AG04450 (cell line): ENCODE measurements at regions of chr19 and their contacts with region 1.

Region 1: GRCh38 chr19:15251749-15252397 is 19.6 kb upstream of the EPHX3 start:
- DNase-seq: peak; percentile 90
- H3K4me3 ChIP-seq: peak overlapping the region; percentile 34; the same call in 1 of the 2 replicates
- H3K27ac ChIP-seq: peak overlapping the region; percentile 100
- H3K27me3 ChIP-seq: no peaks in the 10 kb centered on the region
- CTCF ChIP-seq: peak; percentile 64

Region 2: DNA sequence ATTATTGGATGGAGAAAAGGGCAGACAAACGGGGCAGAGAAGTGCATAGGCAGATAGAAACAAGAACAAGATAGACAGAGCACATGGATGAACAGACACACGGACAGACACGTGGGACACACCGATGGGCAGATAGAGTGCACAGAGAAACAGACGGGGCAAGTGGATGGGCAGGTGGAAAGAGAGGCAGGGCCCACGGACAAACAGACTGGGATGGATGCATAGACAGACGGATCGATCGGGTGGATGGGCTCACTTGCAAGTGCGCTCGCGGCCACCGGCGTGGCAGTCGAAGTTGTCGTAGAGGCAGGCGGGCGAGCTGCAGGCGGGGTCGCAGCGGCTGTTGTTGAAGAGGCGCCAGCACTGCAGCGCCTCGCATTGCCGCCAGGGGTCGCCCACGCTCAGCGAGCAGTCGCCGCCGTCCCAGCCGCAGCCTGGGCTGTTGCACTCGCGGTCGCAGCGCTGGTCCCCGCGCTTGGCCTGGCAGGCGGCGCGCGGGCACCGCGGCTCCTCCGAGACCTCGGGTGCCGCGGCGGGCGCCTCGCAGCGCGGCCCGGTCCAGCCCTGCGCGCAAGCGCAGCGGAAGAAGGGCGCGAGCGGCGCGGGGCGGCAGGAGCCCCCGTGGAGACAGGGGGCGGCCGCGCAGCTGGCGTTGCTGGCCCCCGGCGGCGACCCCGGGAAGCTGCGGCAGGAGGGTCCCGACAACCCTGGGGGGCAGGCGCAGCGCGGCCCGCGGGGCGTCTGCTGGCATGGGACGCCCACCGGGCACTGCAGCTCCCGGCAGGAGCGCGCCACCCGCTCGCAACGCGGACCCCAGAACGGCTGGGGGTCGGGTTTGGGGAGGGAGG is 74.4 kb before region 1 on chr19:
- CTCF ChIA-PET with region 1: interaction called, 14 read pairs
- POLR2A ChIA-PET with region 1: interaction called, 7 read pairs
- DNase-seq: no peak
- H3K4me3 ChIP-seq: no peak overlapping the region; the same call in 1 of the 2 replicates
- H3K27ac ChIP-seq: no peak overlapping the region
- H3K27me3 ChIP-seq: no peaks in the 10 kb centered on the region
- CTCF ChIP-seq: peak; percentile 79

Region 3: GRCh38 chr19:15236886-15237285 is 15.0 kb before region 1 on chr19:
- CTCF ChIA-PET with region 1: no interaction called
- POLR2A ChIA-PET with region 1: interaction called, 11 read pairs
- DNase-seq: no peak
- H3K4me3 ChIP-seq: no peak overlapping the region
- H3K27ac ChIP-seq: no peak overlapping the region
- H3K27me3 ChIP-seq: no peaks in the 10 kb centered on the region
- CTCF ChIP-seq: no peak

Region 4: DNA sequence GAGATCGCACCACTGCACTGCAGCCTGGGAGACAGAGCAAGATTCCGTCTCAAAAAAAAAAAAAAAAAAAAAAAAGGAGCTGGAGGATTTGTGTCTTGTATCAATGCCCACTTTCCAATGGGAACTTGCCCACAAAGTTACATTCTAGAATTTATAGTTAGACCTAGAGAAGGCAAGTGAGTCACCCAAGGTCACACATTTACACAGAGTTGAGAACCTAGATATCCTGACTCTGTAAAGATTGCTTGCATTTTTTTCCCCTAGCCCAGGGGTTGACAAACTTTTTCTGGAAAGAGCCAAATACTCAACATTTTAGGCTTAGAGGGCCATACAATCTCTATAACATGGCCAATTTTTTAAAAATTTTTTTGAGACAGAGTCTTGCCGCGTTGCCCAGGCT is 88.2 kb after region 1 on chr19:
- CTCF ChIA-PET with region 1: no interaction called
- POLR2A ChIA-PET with region 1: no interaction called
- DNase-seq: no peak
- H3K4me3 ChIP-seq: no peak overlapping the region
- H3K27ac ChIP-seq: no peak overlapping the region
- H3K27me3 ChIP-seq: no peaks in the 10 kb centered on the region
- CTCF ChIP-seq: no peak

Region 5: GRCh38 chr19:15379083-15379995 is 127.5 kb after region 1 on chr19 and contains the start of gene AKAP8:
- CTCF ChIA-PET with region 1: interaction called, 5 read pairs
- POLR2A ChIA-PET with region 1: interaction called, 15 read pairs
- DNase-seq: peak; percentile 96
- H3K4me3 ChIP-seq: peak within 1 kb of the TSS; percentile 99
- H3K27ac ChIP-seq: peak within 1 kb of the TSS; percentile 91
- H3K27me3 ChIP-seq: no peaks in the 10 kb centered on the region
- CTCF ChIP-seq: no peak
- polyA plus RNA-seq, gene AKAP8: 11.7 and 12.4 TPM in 2 replicates

Region 6: DNA sequence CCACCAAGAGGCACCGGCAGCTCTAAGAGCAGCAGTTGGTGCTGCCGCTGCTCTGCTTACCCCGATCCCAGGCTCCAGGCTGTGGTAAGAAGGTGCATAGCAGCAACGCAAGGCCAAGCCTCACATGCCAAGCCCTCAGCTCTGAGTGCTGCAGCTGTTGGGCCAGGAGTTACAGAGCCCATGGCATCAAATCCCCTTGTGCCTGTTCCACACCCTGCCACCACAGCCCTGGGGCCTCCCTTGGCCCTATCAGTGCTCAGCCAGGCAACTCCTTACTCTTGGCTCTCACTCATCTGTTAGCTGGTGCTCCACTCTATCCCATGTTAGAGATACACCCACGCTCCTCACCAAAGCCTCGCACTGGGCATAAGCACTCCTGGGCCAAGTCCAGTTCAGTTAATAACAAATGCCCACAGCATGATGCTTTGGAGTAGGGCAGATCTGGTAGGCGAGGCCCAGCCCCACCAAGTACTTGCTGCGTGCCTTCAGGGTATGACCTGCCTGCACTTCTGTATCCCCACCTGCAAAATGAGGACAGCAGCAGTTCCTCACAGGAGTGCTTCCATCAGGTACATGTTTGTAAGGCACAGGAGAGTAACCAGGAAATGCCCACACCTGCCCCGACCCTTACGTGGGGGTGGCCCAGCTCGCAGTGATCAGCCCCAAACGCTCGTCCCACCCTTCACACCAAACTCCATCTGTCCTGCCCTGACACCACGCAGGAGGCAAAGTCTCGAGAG is 150.7 kb after region 1 on chr19:
- CTCF ChIA-PET with region 1: no interaction called
- POLR2A ChIA-PET with region 1: no interaction called
- DNase-seq: no peak
- H3K4me3 ChIP-seq: no peak overlapping the region
- H3K27ac ChIP-seq: no peak overlapping the region
- H3K27me3 ChIP-seq: no peaks in the 10 kb centered on the region
- CTCF ChIP-seq: no peak

Region 7: GRCh38 chr19:15555759-15556633 is 304.1 kb after region 1 on chr19:
- CTCF ChIA-PET with region 1: interaction called, 10 read pairs
- POLR2A ChIA-PET with region 1: no interaction called
- DNase-seq: peak; percentile 66
- H3K4me3 ChIP-seq: peak overlapping the region; percentile 31
- H3K27ac ChIP-seq: peak overlapping the region; percentile 31
- H3K27me3 ChIP-seq: peaks cover 5% of the 10 kb centered on the region
- CTCF ChIP-seq: peak; percentile 85